ENCODE measurements at regions of chr19 and their contacts with region 1.

Region 1: DNA sequence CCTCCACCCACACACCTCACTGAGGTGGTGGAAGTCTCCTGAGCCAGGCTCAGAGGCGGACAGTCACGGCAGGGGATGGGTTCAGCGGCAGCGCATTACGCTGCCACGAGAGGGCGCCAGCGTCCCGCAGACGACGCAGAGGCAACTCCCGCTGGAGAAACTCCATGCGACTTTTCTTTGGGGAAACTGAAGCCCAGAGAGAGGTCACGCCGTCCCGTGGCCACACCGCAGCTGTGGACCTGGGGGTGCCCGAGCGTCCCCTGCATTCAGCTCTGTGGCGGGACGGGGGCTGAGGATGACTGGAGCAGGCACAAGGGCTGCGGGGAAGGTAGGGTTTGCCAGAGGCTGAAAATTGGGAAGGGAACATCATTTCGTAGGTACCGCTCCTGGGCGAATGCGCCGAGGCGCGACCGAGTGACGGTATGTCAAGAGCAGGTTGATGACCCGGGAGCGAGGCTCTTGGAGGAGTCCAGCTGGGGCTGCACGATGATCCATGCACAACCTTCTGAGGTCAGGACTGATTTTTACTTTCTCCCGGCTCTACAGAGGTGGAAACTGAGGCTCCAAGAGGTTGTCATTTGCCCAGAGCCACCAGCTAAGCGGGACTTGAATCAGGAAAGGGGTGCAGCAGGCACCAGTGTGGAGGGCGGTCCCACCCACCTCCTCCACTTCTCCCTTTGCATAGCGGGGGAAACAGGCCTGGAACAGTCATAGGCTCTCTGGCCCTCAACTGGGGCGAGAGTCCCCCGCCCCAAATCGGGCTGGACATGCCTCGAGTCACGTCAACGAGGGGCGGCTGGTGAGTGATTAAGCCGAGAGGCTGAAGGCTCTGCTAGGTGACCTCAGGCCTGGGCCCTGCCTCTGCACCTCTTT is 690 bp upstream of the ARRDC2 start:
- DNase-seq: peak; percentile 88
- H3K4me3 Mint-ChIP-seq: peak overlapping the region; percentile 83
- H3K27ac Mint-ChIP-seq: peak overlapping the region; percentile 82
- H3K4me1 Mint-ChIP-seq: peaks cover 35% of the 10 kb centered on the region
- H3K27me3 Mint-ChIP-seq: no peaks in the 10 kb centered on the region

Region 2: GRCh38 chr19:17938092-17938845 is 69.0 kb before region 1 on chr19:
- CTCF ChIA-PET with region 1: interaction called, 289 read pairs
- POLR2A ChIA-PET with region 1: interaction called, 3 read pairs
- intact Hi-C with region 1: no loop called
- DNase-seq: peak; percentile 91
- H3K4me3 Mint-ChIP-seq: no peak overlapping the region
- H3K27ac Mint-ChIP-seq: no peak overlapping the region
- H3K4me1 Mint-ChIP-seq: peaks cover 13% of the 10 kb centered on the region
- H3K27me3 Mint-ChIP-seq: no peaks in the 10 kb centered on the region

Region 3: DNA sequence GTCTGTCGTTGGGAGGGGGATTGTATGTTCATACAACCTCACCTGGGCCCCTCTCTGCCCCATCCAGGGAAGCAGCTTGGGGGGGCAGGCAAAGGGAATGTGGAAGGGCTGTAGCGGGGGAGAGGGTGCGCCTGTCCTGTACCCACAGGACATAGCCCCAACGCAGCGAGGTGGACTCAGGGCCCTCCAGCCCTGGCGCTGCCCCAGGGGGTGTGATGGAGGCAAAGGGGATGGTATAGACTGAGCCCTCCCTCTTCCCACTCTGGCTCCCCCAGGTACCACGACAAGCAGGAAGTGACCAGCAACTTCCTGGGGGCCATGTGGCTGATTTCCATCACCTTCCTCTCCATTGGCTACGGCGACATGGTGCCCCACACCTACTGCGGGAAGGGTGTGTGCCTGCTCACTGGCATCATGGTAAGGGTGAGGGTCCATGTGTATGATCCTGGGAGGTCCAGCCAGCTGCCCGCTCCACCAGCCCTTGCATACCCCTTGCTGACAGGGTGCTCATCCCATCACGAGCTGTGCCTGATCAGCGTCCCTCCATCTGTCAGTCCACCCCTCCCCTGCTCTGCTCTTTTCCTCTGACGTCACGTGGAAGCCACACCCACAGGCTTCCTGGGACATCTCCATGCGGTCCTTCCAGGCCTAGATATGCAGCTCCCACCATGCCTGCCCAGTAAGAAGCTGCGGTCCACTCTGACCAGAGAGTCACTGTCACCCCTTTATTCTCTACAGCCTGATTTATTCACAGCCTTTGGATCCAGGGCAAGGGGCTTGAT is 22.1 kb before region 1 on chr19:
- CTCF ChIA-PET with region 1: no interaction called
- POLR2A ChIA-PET with region 1: no interaction called
- intact Hi-C with region 1: no loop called
- DNase-seq: no peak
- H3K4me3 Mint-ChIP-seq: no peak overlapping the region
- H3K27ac Mint-ChIP-seq: no peak overlapping the region
- H3K4me1 Mint-ChIP-seq: no peaks in the 10 kb centered on the region
- H3K27me3 Mint-ChIP-seq: peaks cover 6% of the 10 kb centered on the region

Region 4: GRCh38 chr19:18021121-18021755 is 14.0 kb after region 1 on chr19:
- CTCF ChIA-PET with region 1: interaction called, 3 read pairs
- POLR2A ChIA-PET with region 1: interaction called, 6 read pairs
- intact Hi-C with region 1: loop called (anchors 2 kb)
- DNase-seq: peak; percentile 84
- H3K4me3 Mint-ChIP-seq: peak overlapping the region; percentile 76
- H3K27ac Mint-ChIP-seq: peak overlapping the region; percentile 95
- H3K4me1 Mint-ChIP-seq: peaks cover 58% of the 10 kb centered on the region
- H3K27me3 Mint-ChIP-seq: no peaks in the 10 kb centered on the region

Region 5: DNA sequence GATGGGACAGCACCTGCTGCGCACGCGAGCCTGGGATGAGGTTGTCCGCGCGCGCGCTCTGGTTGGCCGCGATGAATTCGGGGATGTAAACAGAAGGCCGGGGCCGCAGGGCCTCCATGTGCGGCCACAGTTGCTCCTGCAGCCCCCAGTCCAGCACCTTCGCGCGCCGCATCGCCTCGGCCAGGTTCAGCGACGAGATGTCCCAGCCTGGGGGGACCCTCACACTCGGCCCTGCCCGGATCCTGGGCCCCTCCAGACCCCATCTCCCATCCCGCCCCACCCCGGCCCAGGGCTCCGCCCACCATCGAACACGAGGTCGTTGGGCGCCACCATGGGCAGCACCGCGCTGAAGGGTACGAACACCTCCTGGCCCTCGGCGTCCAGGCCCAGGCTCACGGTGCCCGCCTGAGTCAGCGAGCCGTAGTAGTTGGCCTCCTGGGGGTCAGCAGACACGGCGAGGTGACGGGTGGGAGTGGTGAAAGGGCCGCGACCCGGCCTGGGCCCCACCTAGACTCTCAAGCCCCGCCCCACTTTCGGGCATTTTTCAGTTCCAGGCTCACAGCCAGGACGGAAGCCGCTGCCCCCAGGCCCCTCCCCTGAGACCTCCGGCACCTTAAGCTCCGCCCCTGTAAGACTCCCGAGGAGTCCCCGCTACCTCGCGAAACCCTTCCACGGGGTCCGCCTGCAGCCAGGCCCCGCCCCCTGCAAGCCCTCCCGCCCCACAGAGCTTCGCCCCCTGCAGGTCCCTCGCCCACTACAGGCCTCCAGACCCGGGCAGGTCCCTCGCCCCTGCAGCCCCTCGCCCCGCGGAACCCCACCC is 429.6 kb after region 1 on chr19:
- CTCF ChIA-PET with region 1: no interaction called
- POLR2A ChIA-PET with region 1: no interaction called
- intact Hi-C with region 1: no loop called
- DNase-seq: peak; percentile 79
- H3K4me3 Mint-ChIP-seq: peak overlapping the region; percentile 65
- H3K27ac Mint-ChIP-seq: peak overlapping the region; percentile 56
- H3K4me1 Mint-ChIP-seq: peaks cover 16% of the 10 kb centered on the region
- H3K27me3 Mint-ChIP-seq: no peaks in the 10 kb centered on the region

Measured in activated CD4-positive, alpha-beta memory T cell treated with anti-CD3 and anti-CD28 coated beads for 36 hours (primary cell).